Natural killer cell (primary cell): ENCODE measurements at regions of chr15 and their contacts with region 1.

Region 1: GRCh38 chr15:59528965-59529402 is 82.6 kb upstream of the GCNT3 start:
- DNase-seq: peak; percentile 51 to 82
- ATAC-seq: peak; percentile 81 to 88 (median 88)
- H3K4me3 ChIP-seq: no peak overlapping the region
- H3K4me3 Mint-ChIP-seq: no peak overlapping the region
- H3K27ac ChIP-seq: no peak overlapping the region
- H3K27ac Mint-ChIP-seq: no peak overlapping the region
- H3K4me1 ChIP-seq: peaks cover 13% of the 10 kb centered on the region
- H3K4me1 Mint-ChIP-seq: peaks cover 9 to 18% of the 10 kb centered on the region in 2 donors
- H3K27me3 ChIP-seq: peaks cover 1% of the 10 kb centered on the region
- H3K27me3 Mint-ChIP-seq: peaks cover 14 to 34% of the 10 kb centered on the region in 2 donors
- CTCF ChIP-seq: peak; percentile 78

Region 2: GRCh38 chr15:57561041-57561711 is 1967.8 kb before region 1 on chr15:
- intact Hi-C with region 1: loop called (anchors 5 kb)
- DNase-seq: peak; percentile 44 to 82
- ATAC-seq: peak; percentile 88 to 96 (median 96)
- H3K4me3 ChIP-seq: no peak overlapping the region
- H3K4me3 Mint-ChIP-seq: no peak overlapping the region
- H3K27ac ChIP-seq: no peak overlapping the region
- H3K27ac Mint-ChIP-seq: no peak overlapping the region
- H3K4me1 ChIP-seq: peaks cover 12% of the 10 kb centered on the region
- H3K4me1 Mint-ChIP-seq: peaks cover 11 to 12% of the 10 kb centered on the region in 2 donors
- H3K27me3 ChIP-seq: no peaks in the 10 kb centered on the region
- H3K27me3 Mint-ChIP-seq: peaks cover 20 to 47% of the 10 kb centered on the region in 2 donors
- CTCF ChIP-seq: peak; percentile 94

Region 3: GRCh38 chr15:58227706-58228543 is 1301.1 kb before region 1 on chr15:
- intact Hi-C with region 1: loop called (anchors 1 kb)
- DNase-seq: peak; percentile 56 to 83
- ATAC-seq: peak; percentile 67 to 75 (median 67)
- H3K4me3 ChIP-seq: no peak overlapping the region
- H3K4me3 Mint-ChIP-seq: no peak overlapping the region
- H3K27ac ChIP-seq: no peak overlapping the region
- H3K27ac Mint-ChIP-seq: no peak overlapping the region
- H3K4me1 ChIP-seq: no peaks in the 10 kb centered on the region
- H3K4me1 Mint-ChIP-seq: no peaks in the 10 kb centered on the region
- H3K27me3 ChIP-seq: peaks cover 2% of the 10 kb centered on the region
- H3K27me3 Mint-ChIP-seq: peaks cover 14 to 35% of the 10 kb centered on the region in 2 donors
- CTCF ChIP-seq: peak; percentile 91

Region 4: GRCh38 chr15:58957101-58957973 is 571.6 kb before region 1 on chr15:
- intact Hi-C with region 1: loop called (anchors 1 kb)
- DNase-seq: peak; percentile 23 to 87
- ATAC-seq: peak; percentile 91 to 98 (median 96)
- H3K4me3 ChIP-seq: no peak overlapping the region
- H3K4me3 Mint-ChIP-seq: no peak overlapping the region
- H3K27ac ChIP-seq: no peak overlapping the region
- H3K27ac Mint-ChIP-seq: no peak overlapping the region
- H3K4me1 ChIP-seq: no peaks in the 10 kb centered on the region
- H3K4me1 Mint-ChIP-seq: peaks cover 5 to 6% of the 10 kb centered on the region in 2 donors
- H3K27me3 ChIP-seq: no peaks in the 10 kb centered on the region
- H3K27me3 Mint-ChIP-seq: peaks cover 0 to 8% of the 10 kb centered on the region in 2 donors
- CTCF ChIP-seq: peak; percentile 83

Region 5: GRCh38 chr15:59247364-59247763 is 281.6 kb before region 1 on chr15:
- intact Hi-C with region 1: loop called (anchors 1 kb)
- DNase-seq: peak; percentile 42 to 73
- ATAC-seq: peak; percentile 73 to 93 (median 90)
- H3K4me3 ChIP-seq: no peak overlapping the region
- H3K4me3 Mint-ChIP-seq: peak overlapping the region; percentile 6
- H3K27ac ChIP-seq: no peak overlapping the region
- H3K27ac Mint-ChIP-seq: no peak overlapping the region
- H3K4me1 ChIP-seq: peaks cover 12% of the 10 kb centered on the region
- H3K4me1 Mint-ChIP-seq: peaks cover 6 to 13% of the 10 kb centered on the region in 2 donors
- H3K27me3 ChIP-seq: no peaks in the 10 kb centered on the region
- H3K27me3 Mint-ChIP-seq: no peaks in the 10 kb centered on the region
- CTCF ChIP-seq: peak; percentile 72